Mammary epithelial cell (primary cell): ENCODE measurements at regions of chr13 and their contacts with region 1.

Region 1: DNA sequence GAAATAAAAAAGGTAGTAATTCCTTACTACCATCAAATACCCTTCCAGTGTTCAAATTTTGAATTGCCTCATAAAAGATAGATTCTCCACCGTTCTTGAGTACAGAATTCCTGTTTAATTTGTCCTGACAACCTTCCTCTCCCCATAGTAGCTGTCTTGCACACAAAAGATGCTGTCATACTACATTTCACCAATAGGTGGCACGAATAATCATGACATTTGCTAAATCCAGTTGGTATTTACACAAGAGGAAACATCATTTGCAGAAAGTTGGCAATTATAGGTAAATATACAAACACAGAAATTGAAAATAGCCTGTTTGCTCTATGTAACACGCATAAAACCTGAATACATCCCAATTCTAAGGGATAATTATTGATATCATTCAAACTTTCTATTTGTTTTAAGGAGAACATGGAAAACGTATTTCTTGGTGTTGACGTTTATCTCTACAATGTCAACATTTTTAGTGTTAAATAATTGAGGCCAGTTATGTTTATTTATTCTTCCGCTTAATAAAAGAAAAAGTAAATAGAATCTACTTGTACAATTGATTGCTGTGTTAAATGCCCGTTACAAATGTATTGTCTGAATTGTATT is 58.3 kb upstream of the CLDN10 start:
- DNase-seq: peak; percentile 65
- H3K4me3 ChIP-seq: no peak overlapping the region
- H3K27ac ChIP-seq: no peak overlapping the region
- H3K4me1 ChIP-seq: peaks cover 3% of the 10 kb centered on the region
- H3K27me3 ChIP-seq: no peaks in the 10 kb centered on the region
- CTCF ChIP-seq: peak; percentile 75 to 77

Region 2: GRCh38 chr13:95323930-95324662 is 170.1 kb before region 1 on chr13:
- CTCF ChIA-PET with region 1: no interaction called
- dilution Hi-C with region 1: no loop called
- in situ Hi-C with region 1: no loop called
- intact Hi-C with region 1: no loop called
- DNase-seq: no peak
- H3K4me3 ChIP-seq: no peak overlapping the region
- H3K27ac ChIP-seq: no peak overlapping the region
- H3K4me1 ChIP-seq: no peaks in the 10 kb centered on the region
- H3K27me3 ChIP-seq: no peaks in the 10 kb centered on the region
- CTCF ChIP-seq: no peak

Region 3: GRCh38 chr13:95471960-95472359 is 22.2 kb before region 1 on chr13:
- CTCF ChIA-PET with region 1: no interaction called
- dilution Hi-C with region 1: no loop called
- in situ Hi-C with region 1: no loop called
- intact Hi-C with region 1: no loop called
- DNase-seq: no peak
- H3K4me3 ChIP-seq: no peak overlapping the region
- H3K27ac ChIP-seq: no peak overlapping the region
- H3K4me1 ChIP-seq: no peaks in the 10 kb centered on the region
- H3K27me3 ChIP-seq: no peaks in the 10 kb centered on the region
- CTCF ChIP-seq: no peak

Region 4: DNA sequence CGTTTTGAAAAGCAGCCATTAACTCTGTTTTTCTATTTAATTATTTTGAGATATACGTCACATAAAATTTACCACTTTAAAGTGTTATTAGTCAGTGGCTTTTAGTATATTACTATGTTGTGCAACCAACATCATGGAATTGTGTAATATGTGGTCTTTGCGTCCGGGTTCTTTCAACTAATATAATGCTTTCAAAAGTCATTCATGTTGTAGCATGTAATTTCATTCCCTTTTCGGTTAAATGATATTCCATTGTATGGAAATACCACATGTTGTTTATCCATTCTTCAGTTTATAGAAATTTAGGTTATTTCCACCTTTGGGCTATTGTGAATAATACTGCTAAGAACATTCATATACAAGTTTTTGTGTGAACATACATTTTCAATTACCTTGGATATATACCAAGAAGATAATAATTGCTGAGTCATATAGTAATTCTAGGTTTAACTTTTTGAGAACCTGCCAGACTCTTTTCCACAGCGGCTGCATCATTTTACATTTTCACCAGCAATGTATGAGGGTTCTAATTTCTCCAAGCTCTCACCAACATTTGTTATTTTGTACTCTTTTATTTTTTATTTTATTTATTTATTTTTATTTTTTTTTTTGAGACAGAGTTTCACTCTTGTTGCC is 30.2 kb after region 1 on chr13:
- CTCF ChIA-PET with region 1: no interaction called
- dilution Hi-C with region 1: no loop called
- in situ Hi-C with region 1: no loop called
- intact Hi-C with region 1: loop called (anchors 1 kb)
- DNase-seq: peak; percentile 86
- H3K4me3 ChIP-seq: no peak overlapping the region
- H3K27ac ChIP-seq: no peak overlapping the region
- H3K4me1 ChIP-seq: peaks cover 5% of the 10 kb centered on the region
- H3K27me3 ChIP-seq: no peaks in the 10 kb centered on the region
- CTCF ChIP-seq: no peak

Region 5: GRCh38 chr13:95564733-95565291 is 70.6 kb after region 1 on chr13:
- CTCF ChIA-PET with region 1: no interaction called
- dilution Hi-C with region 1: no loop called
- in situ Hi-C with region 1: no loop called
- intact Hi-C with region 1: loop called (anchors 1 kb)
- DNase-seq: peak; percentile 81
- H3K4me3 ChIP-seq: no peak overlapping the region
- H3K27ac ChIP-seq: no peak overlapping the region
- H3K4me1 ChIP-seq: peaks cover 7% of the 10 kb centered on the region
- H3K27me3 ChIP-seq: no peaks in the 10 kb centered on the region
- CTCF ChIP-seq: no peak

Region 6: DNA sequence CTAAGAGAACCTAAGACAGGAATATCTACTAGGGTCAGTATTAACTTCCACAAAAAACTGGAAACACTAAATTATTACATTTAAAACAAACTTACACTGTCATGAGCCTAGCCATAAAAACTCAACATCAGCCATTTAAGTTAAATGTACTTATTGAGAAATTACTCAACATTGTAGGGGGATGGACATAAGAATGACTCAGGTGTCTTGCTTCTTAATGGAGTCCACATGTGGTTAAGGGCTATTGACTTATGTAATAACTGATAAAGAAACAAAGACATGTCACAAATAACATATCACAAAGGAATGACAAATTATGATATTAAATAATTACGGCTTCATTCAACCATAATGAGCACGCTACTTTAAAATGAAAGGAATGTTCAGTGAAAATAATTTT is 94.5 kb after region 1 on chr13:
- CTCF ChIA-PET with region 1: no interaction called
- dilution Hi-C with region 1: no loop called
- in situ Hi-C with region 1: no loop called
- intact Hi-C with region 1: no loop called
- DNase-seq: peak; percentile 57
- H3K4me3 ChIP-seq: no peak overlapping the region
- H3K27ac ChIP-seq: peak overlapping the region; percentile 62
- H3K4me1 ChIP-seq: peaks cover 9% of the 10 kb centered on the region
- H3K27me3 ChIP-seq: no peaks in the 10 kb centered on the region
- CTCF ChIP-seq: no peak

Region 7: DNA sequence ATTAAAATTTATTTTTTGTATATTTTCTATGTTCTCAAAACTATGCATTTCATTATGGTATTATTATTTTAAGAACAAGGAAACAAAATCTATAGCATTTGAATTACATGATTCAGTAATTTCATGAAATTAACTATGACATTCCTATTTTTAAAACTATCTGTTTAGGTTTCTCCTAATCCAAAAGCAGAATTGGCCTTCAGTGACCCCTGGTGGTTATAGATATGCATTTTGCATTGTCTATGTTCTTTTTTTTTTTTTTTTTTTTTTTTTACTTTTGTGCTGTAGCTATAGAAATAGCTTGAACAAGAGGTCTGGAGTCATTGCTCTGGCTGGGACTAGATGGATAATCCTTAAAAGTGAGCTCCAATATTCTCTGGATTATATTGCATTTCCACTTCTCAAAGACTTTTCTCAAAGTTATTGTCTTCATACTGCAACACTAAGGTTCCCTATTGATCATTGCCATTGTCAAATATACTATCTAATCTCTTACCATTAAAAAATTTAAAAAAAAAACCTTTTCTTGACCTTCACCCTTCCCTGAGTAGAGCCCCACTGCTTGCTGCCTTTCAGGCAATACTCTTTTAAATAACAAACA is 166.9 kb after region 1 on chr13:
- CTCF ChIA-PET with region 1: no interaction called
- dilution Hi-C with region 1: no loop called
- in situ Hi-C with region 1: no loop called
- intact Hi-C with region 1: loop called (anchors 5 kb)
- DNase-seq: peak; percentile 24
- H3K4me3 ChIP-seq: no peak overlapping the region
- H3K27ac ChIP-seq: no peak overlapping the region
- H3K4me1 ChIP-seq: no peaks in the 10 kb centered on the region
- H3K27me3 ChIP-seq: no peaks in the 10 kb centered on the region
- CTCF ChIP-seq: peak; percentile 72 to 76